ENCODE measurements at regions of chr12 and their contacts with region 1.

Region 1: GRCh38 chr12:57904848-57905811 is 36.2 kb upstream of the ATP23 start:
- DNase-seq: peak; percentile 84 to 89
- H3K4me3 ChIP-seq: no peak overlapping the region
- H3K4me3 Mint-ChIP-seq: peak overlapping the region; percentile 66
- H3K27ac Mint-ChIP-seq: no peak overlapping the region
- H3K4me1 ChIP-seq: no peaks in the 10 kb centered on the region
- H3K4me1 Mint-ChIP-seq: peaks cover 16% of the 10 kb centered on the region
- H3K27me3 ChIP-seq: no peaks in the 10 kb centered on the region
- H3K27me3 Mint-ChIP-seq: peaks cover 15% of the 10 kb centered on the region
- CTCF ChIP-seq: peak; percentile 99 to 100

Region 2: GRCh38 chr12:57803319-57803893 is 101.7 kb before region 1 on chr12:
- CTCF ChIA-PET with region 1: interaction called, 10 read pairs
- POLR2A ChIA-PET with region 1: no interaction called
- intact Hi-C with region 1: loop called (anchors 1 kb)
- DNase-seq: peak in 1 of 2 experiments; percentile 47
- H3K4me3 ChIP-seq: no peak overlapping the region
- H3K4me3 Mint-ChIP-seq: no peak overlapping the region
- H3K27ac Mint-ChIP-seq: no peak overlapping the region
- H3K4me1 ChIP-seq: no peaks in the 10 kb centered on the region
- H3K4me1 Mint-ChIP-seq: no peaks in the 10 kb centered on the region
- H3K27me3 ChIP-seq: no peaks in the 10 kb centered on the region
- H3K27me3 Mint-ChIP-seq: no peaks in the 10 kb centered on the region
- CTCF ChIP-seq: peak; percentile 59 to 83

Region 3: GRCh38 chr12:57836442-57837375 is 68.4 kb before region 1 on chr12:
- CTCF ChIA-PET with region 1: interaction called, 10 read pairs
- POLR2A ChIA-PET with region 1: no interaction called
- intact Hi-C with region 1: loop called (anchors 1 kb)
- DNase-seq: no peak
- H3K4me3 ChIP-seq: no peak overlapping the region
- H3K4me3 Mint-ChIP-seq: no peak overlapping the region
- H3K27ac Mint-ChIP-seq: no peak overlapping the region
- H3K4me1 ChIP-seq: peaks cover 20% of the 10 kb centered on the region
- H3K4me1 Mint-ChIP-seq: peaks cover 24% of the 10 kb centered on the region
- H3K27me3 ChIP-seq: no peaks in the 10 kb centered on the region
- H3K27me3 Mint-ChIP-seq: no peaks in the 10 kb centered on the region
- CTCF ChIP-seq: no peak

Region 4: GRCh38 chr12:57887631-57888408 is 17.3 kb before region 1 on chr12:
- CTCF ChIA-PET with region 1: no interaction called
- POLR2A ChIA-PET with region 1: no interaction called
- intact Hi-C with region 1: no loop called
- DNase-seq: no peak
- H3K4me3 ChIP-seq: no peak overlapping the region
- H3K4me3 Mint-ChIP-seq: no peak overlapping the region
- H3K27ac Mint-ChIP-seq: no peak overlapping the region
- H3K4me1 ChIP-seq: 0 out of 2 replicates have a peak, but pooled peaks cover 5% of the 10 kb centered on the region
- H3K4me1 Mint-ChIP-seq: peaks cover 6% of the 10 kb centered on the region
- H3K27me3 ChIP-seq: no peaks in the 10 kb centered on the region
- H3K27me3 Mint-ChIP-seq: no peaks in the 10 kb centered on the region
- CTCF ChIP-seq: no peak

Region 5: GRCh38 chr12:58044966-58045568 is 139.9 kb after region 1 on chr12:
- CTCF ChIA-PET with region 1: no interaction called
- POLR2A ChIA-PET with region 1: no interaction called
- intact Hi-C with region 1: no loop called
- DNase-seq: no peak
- H3K4me3 ChIP-seq: no peak overlapping the region
- H3K4me3 Mint-ChIP-seq: no peak overlapping the region
- H3K27ac Mint-ChIP-seq: no peak overlapping the region
- H3K4me1 ChIP-seq: no peaks in the 10 kb centered on the region
- H3K4me1 Mint-ChIP-seq: no peaks in the 10 kb centered on the region
- H3K27me3 ChIP-seq: no peaks in the 10 kb centered on the region
- H3K27me3 Mint-ChIP-seq: peaks cover 8% of the 10 kb centered on the region
- CTCF ChIP-seq: no peak